ENCODE measurements at regions of chr10 and their contacts with region 1.

Region 1: DNA sequence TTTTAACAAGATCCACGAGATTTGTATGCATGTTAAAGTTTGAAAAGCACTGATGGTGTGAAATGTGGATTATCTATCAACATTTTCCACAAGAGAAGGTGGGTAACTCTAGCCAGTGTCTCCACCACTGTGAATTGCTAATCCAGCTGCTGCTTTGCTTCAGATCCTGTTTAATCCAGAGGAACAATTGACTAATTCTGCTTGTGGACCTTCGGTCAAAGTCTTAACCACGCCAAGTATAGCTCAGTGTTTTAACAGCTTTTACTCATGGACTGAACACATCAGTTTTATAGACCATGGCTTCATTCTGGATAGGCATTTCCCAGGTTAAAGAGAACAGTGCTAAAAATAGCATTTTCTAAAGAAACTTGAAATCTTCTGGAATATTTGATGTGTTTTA is 23.5 kb downstream of the ADK start:
- DNase-seq: no peak
- ATAC-seq: no peak
- H3K4me3 ChIP-seq: no peak overlapping the region
- H3K27ac ChIP-seq: no peak overlapping the region
- H3K4me1 ChIP-seq: peaks cover 6% of the 10 kb centered on the region
- H3K27me3 ChIP-seq: no peaks in the 10 kb centered on the region
- CTCF ChIP-seq: no peak

Region 2: DNA sequence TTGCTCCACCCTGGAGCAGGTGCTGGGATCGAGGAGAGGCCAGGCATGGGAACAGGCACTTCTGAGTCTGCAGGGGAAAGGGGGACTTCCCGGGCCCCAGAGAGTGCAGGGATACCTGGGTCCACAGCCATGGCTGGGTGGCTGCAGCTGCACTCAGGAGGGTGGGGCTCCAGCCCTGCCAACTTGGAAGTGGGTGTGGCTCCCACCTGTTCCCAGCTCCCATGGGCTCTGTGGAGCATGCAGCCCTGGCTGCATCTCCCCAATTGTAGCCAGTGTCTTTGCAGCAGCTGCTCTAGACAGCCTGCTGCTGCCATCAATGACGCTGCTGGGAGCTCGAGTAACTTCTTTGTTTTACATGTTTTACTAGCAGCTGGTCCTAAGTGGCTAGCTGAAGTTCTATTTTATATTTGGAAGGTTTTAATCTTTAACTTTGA is 33.6 kb after region 1 on chr10:
- intact Hi-C with region 1: loop called in 1 of 2 experiments (anchors 5 kb)
- DNase-seq: peak; percentile 23 to 76
- ATAC-seq: peak; percentile 88 to 90 (median 89)
- H3K4me3 ChIP-seq: no peak overlapping the region
- H3K27ac ChIP-seq: peak overlapping the region; percentile 66
- H3K4me1 ChIP-seq: peaks cover 17% of the 10 kb centered on the region
- H3K27me3 ChIP-seq: no peaks in the 10 kb centered on the region
- CTCF ChIP-seq: no peak